ENCODE measurements at regions of chr3 and their contacts with region 1.

Region 1: DNA sequence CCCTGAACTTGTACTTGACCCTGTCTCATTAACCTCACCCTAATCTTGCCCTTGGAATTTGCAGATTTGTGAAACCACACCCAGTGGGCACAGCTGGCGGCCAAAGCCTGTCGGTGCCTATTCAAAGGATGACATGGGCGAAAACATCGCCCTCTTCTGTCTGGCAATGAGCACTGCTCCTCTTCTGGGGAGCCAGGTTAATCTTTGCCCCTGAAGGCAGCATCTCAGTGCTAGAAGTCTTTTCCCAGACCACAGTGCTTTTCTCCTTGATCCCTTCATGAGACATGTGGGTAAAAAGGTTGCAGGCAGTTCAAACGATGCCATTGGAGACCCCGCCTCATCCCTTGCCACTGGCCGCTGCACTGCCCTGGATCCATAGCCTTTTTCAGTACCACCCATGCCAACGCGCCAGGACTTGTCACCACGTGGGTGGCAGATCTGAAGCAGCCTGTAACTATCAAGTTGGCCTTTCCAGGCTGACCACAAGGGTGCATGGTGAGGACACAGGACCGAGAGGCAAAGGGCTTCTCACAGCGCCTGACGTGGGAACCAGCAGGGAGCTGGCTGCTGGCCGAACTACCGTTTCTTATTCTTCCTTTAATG is 6.5 kb upstream of the DNASE1L3 start:
- DNase-seq: peak; percentile 13 to 77 (median 42)
- ATAC-seq: peak; percentile 82 to 93 (median 90)
- H3K4me3 ChIP-seq: no peak overlapping the region
- H3K4me3 Mint-ChIP-seq: peak overlapping the region in 2 of 3 donors; percentile 10 to 40
- H3K27ac ChIP-seq: no peak overlapping the region
- H3K27ac Mint-ChIP-seq: no peak overlapping the region
- H3K4me1 ChIP-seq: peaks cover 0 to 6% of the 10 kb centered on the region in 2 experiments
- H3K4me1 Mint-ChIP-seq: peaks cover 10 to 17% (median 12%) of the 10 kb centered on the region in 3 donors
- H3K27me3 ChIP-seq: peaks cover 0 to 3% of the 10 kb centered on the region in 2 experiments
- H3K27me3 Mint-ChIP-seq: peaks cover 0 to 3% of the 10 kb centered on the region in 2 donors

Region 2: DNA sequence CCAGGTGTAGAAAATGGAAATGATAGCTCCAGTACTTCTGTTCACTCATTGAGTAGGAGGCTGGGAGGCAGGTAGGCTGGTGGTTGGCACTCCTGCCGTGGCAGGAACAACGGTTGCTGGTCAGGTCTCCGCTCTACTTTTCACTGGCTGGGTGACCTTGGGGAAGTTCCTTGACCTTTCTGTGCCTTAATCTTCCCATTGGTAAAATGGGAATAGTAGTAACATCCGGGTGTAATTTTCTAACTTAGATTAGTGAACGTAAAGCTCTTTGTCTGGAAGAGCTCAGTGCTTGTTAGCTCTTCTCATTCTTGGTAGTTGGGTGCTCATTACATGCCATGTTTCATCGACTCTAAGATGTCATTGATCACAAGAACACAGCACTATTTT is 254.9 kb before region 1 on chr3:
- CTCF ChIA-PET with region 1: interaction called in 1 of 2 experiments, 10 read pairs
- POLR2A ChIA-PET with region 1: no interaction called
- DNase-seq: no peak
- ATAC-seq: no peak
- H3K4me3 ChIP-seq: no peak overlapping the region
- H3K4me3 Mint-ChIP-seq: no peak overlapping the region
- H3K27ac ChIP-seq: no peak overlapping the region
- H3K27ac Mint-ChIP-seq: no peak overlapping the region
- H3K4me1 ChIP-seq: peaks cover 0 to 10% of the 10 kb centered on the region in 2 experiments
- H3K4me1 Mint-ChIP-seq: peaks cover 10 to 15% (median 13%) of the 10 kb centered on the region in 3 donors
- H3K27me3 ChIP-seq: peaks cover 0 to 12% of the 10 kb centered on the region in 2 experiments
- H3K27me3 Mint-ChIP-seq: no peaks in the 10 kb centered on the region

Region 3: DNA sequence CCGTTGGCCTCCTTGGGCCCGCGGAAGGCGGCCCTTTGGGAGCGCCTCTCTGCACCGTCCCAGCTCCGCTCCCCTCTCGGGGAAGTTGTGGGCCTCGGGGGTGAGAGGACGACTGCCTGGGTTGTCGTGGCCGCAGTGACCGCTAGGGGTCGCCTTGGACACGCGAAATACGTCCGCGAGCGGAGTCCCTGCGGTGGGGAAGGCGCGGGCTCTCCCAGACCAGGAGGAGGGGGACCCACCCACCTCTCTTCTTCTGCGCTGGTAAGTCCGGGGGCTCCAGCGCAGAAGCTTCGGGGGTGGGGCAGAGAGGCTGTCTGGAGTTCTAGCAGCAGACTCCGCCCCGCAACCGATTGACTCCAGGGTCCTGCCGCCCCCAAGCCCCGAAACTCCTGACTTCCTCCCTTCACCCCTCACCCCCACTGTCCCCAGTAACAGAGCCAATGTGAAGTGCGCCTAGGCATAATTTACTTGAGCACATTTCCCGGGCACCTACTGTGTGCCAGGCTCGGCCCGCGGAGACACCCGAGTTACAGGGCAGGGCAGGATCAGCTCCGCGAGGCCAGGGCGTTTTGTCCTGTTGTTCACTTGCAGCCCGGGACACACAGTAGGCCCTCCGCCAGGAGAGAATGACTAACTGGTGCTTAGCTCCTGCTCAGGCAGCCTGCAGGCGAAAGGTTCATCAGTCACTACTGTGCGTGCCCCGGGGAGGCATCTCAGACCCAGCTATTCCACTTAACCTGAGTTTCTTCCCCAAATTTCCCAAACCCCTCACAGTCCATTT is 39.4 kb before region 1 on chr3:
- CTCF ChIA-PET with region 1: interaction called, 9 to 10 read pairs
- POLR2A ChIA-PET with region 1: no interaction called
- DNase-seq: peak; percentile 61 to 92 (median 83)
- ATAC-seq: peak; percentile 90 to 95 (median 92)
- H3K4me3 ChIP-seq: peak overlapping the region; percentile 48 to 58
- H3K4me3 Mint-ChIP-seq: peak overlapping the region; percentile 66 to 77 (median 69)
- H3K27ac ChIP-seq: no peak overlapping the region
- H3K27ac Mint-ChIP-seq: no peak overlapping the region
- H3K4me1 ChIP-seq: peaks cover 0 to 25% of the 10 kb centered on the region in 2 experiments
- H3K4me1 Mint-ChIP-seq: peaks cover 13 to 15% (median 14%) of the 10 kb centered on the region in 3 donors
- H3K27me3 ChIP-seq: peaks cover 0 to 30% of the 10 kb centered on the region in 2 experiments
- H3K27me3 Mint-ChIP-seq: no peaks in the 10 kb centered on the region

Region 4: DNA sequence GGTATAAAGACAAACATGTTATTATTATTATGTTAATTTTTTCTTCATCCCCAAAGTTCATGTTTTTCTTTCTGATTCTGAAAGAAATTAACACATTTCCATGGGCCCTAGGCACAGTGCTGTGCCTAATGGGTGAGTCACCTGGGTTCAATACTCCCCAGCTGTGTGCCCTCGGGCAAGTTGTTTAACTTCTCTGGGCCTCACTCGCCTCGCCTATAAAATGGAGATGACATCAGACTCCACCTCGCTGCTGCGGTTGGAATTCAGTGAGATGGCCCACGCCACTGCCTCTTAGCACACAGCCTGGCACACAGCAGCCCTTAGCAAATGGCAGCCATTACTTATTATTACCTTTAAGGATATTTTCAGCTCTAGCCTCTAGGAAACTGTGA is 29.1 kb before region 1 on chr3:
- CTCF ChIA-PET with region 1: interaction called, 7 to 14 read pairs
- POLR2A ChIA-PET with region 1: interaction called in 1 of 2 experiments, 3 read pairs
- DNase-seq: no peak
- ATAC-seq: no peak
- H3K4me3 ChIP-seq: no peak overlapping the region
- H3K4me3 Mint-ChIP-seq: no peak overlapping the region
- H3K27ac ChIP-seq: no peak overlapping the region
- H3K27ac Mint-ChIP-seq: no peak overlapping the region
- H3K4me1 ChIP-seq: peaks cover 0 to 5% of the 10 kb centered on the region in 2 experiments
- H3K4me1 Mint-ChIP-seq: peaks cover 0 to 2% (median 2%) of the 10 kb centered on the region in 3 donors
- H3K27me3 ChIP-seq: peaks cover 0 to 2% of the 10 kb centered on the region in 2 experiments
- H3K27me3 Mint-ChIP-seq: no peaks in the 10 kb centered on the region

Region 5: GRCh38 chr3:58198362-58198761 is 18.9 kb before region 1 on chr3:
- CTCF ChIA-PET with region 1: interaction called, 3 to 10 read pairs
- POLR2A ChIA-PET with region 1: no interaction called
- DNase-seq: no peak
- ATAC-seq: no peak
- H3K4me3 ChIP-seq: no peak overlapping the region
- H3K4me3 Mint-ChIP-seq: no peak overlapping the region
- H3K27ac ChIP-seq: no peak overlapping the region
- H3K27ac Mint-ChIP-seq: no peak overlapping the region
- H3K4me1 ChIP-seq: peaks cover 0 to 4% of the 10 kb centered on the region in 2 experiments
- H3K4me1 Mint-ChIP-seq: peaks cover 2 to 12% (median 8%) of the 10 kb centered on the region in 3 donors
- H3K27me3 ChIP-seq: peaks cover 0 to 14% of the 10 kb centered on the region in 2 experiments
- H3K27me3 Mint-ChIP-seq: peaks cover 5 to 16% of the 10 kb centered on the region in 2 donors

Region 6: GRCh38 chr3:59326246-59327024 is 1109.1 kb after region 1 on chr3:
- CTCF ChIA-PET with region 1: interaction called in 1 of 2 experiments, 11 read pairs
- POLR2A ChIA-PET with region 1: no interaction called
- DNase-seq: no peak
- ATAC-seq: no peak
- H3K4me3 ChIP-seq: no peak overlapping the region
- H3K4me3 Mint-ChIP-seq: no peak overlapping the region
- H3K27ac ChIP-seq: no peak overlapping the region
- H3K27ac Mint-ChIP-seq: no peak overlapping the region
- H3K4me1 ChIP-seq: no peaks in the 10 kb centered on the region
- H3K4me1 Mint-ChIP-seq: no peaks in the 10 kb centered on the region
- H3K27me3 ChIP-seq: no peaks in the 10 kb centered on the region
- H3K27me3 Mint-ChIP-seq: no peaks in the 10 kb centered on the region